ENCODE measurements at regions of chrX and their contacts with region 1.

Region 1: GRCh38 chrX:87517571-87518141 is at the start of gene KLHL4:
- DNase-seq: peak; percentile 92
- H3K4me3 ChIP-seq: peak within 1 kb of the TSS; percentile 49 to 98 (median 82)
- H3K27ac ChIP-seq: peak within 1 kb of the TSS; percentile 97
- H3K4me1 ChIP-seq: peaks cover 17% of the 10 kb centered on the region
- H3K27me3 ChIP-seq: no peaks in the 10 kb centered on the region
- CTCF ChIP-seq: no peak
- POLR2A ChIP-seq: no peak
- total RNA-seq, gene KLHL4: 19.3 and 20.9 TPM in 2 replicates

Region 2: DNA sequence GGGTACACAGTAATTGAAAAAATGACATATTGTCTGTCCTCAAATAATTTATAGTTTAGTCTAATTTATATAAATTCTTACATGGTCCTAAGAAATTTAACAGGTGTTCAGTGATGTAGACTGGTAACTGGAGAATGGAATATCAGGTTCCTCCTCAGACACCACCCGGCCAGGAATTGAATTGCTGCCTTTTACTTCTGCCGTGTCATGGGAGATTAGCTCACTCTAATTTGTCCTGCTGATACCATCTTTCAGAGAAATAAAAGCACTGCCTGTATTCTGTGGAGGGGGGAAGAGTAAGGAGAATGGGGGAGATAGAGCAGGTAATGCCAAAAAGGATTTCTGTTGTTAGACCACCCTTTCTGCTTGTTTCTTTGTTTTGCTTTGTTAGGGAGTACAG is 125.3 kb before region 1 on chrX:
- CTCF ChIA-PET with region 1: no interaction called
- POLR2A ChIA-PET with region 1: no interaction called
- dilution Hi-C with region 1: no loop called
- intact Hi-C with region 1: loop called (anchors 1 kb)
- DNase-seq: peak; percentile 36
- H3K4me3 ChIP-seq: no peak overlapping the region
- H3K27ac ChIP-seq: peak overlapping the region; percentile 37
- H3K4me1 ChIP-seq: peaks cover 3% of the 10 kb centered on the region
- H3K27me3 ChIP-seq: no peaks in the 10 kb centered on the region
- CTCF ChIP-seq: no peak
- POLR2A ChIP-seq: no peak

Region 3: GRCh38 chrX:87434618-87435017 is 83.0 kb before region 1 on chrX:
- CTCF ChIA-PET with region 1: no interaction called
- POLR2A ChIA-PET with region 1: no interaction called
- dilution Hi-C with region 1: no loop called
- intact Hi-C with region 1: loop called (anchors 2 kb)
- DNase-seq: peak; percentile 79
- H3K4me3 ChIP-seq: no peak overlapping the region
- H3K27ac ChIP-seq: no peak overlapping the region
- H3K4me1 ChIP-seq: peaks cover 14% of the 10 kb centered on the region
- H3K27me3 ChIP-seq: no peaks in the 10 kb centered on the region
- CTCF ChIP-seq: no peak
- POLR2A ChIP-seq: no peak

Region 4: GRCh38 chrX:87634361-87634760 is 116.7 kb after region 1 on chrX:
- CTCF ChIA-PET with region 1: no interaction called
- POLR2A ChIA-PET with region 1: no interaction called
- dilution Hi-C with region 1: no loop called
- intact Hi-C with region 1: loop called (anchors 2 kb)
- DNase-seq: peak; percentile 69
- H3K4me3 ChIP-seq: no peak overlapping the region
- H3K27ac ChIP-seq: peak overlapping the region; percentile 51
- H3K4me1 ChIP-seq: peaks cover 15% of the 10 kb centered on the region
- H3K27me3 ChIP-seq: no peaks in the 10 kb centered on the region
- CTCF ChIP-seq: no peak
- POLR2A ChIP-seq: no peak